ENCODE measurements at regions of chr1 and their contacts with region 1.

Region 1: DNA sequence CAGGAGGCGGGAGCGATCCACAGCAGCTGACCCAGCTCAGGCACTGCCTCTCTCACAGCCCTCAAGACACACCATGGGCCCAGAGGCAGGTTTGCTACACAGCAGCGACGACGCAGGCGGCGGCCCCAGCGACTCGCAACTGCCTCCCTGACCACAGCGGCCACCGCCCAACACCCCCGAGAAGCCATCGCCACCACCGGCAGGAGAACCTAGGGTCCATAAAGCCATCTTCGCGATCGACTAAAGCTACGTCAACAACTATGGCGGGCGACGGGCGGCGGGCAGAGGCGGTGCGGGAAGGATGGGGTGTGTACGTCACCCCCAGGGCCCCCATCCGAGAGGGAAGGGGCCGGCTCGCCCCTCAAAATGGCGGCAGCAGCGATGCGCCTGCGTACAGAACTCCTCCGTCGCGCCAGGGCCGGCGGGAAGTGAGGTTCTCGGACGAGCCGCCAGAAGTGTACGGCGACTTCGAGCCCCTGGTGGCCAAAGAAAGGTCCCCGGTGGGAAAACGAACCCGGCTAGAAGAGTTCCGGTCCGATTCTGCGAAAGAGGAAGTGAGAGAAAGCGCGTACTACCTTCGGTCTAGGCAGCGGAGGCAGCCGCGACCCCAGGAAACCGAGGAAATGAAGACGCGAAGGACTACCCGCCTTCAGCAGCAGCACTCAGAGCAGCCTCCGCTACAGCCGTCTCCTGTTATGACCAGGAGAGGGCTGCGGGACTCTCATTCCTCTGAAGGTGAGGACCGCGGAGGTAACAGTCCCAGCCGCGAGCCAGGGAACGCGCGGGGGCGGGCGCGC is at the start of gene TOR1AIP1:
- DNase-seq: peak; percentile 98
- H3K4me3 ChIP-seq: peak within 1 kb of the TSS; percentile 65
- H3K27ac ChIP-seq: peak within 1 kb of the TSS; percentile 97
- H3K4me1 ChIP-seq: peaks cover 7% of the 10 kb centered on the region
- H3K27me3 ChIP-seq: no peaks in the 10 kb centered on the region
- CTCF ChIP-seq: peak; percentile 6 to 84 (median 81)
- EP300 ChIP-seq: no peak
- POLR2A ChIP-seq: peak; percentile 99
- total RNA-seq, gene TOR1AIP1: 55.4 to 70.9 (median 61.1) TPM

Region 2: DNA sequence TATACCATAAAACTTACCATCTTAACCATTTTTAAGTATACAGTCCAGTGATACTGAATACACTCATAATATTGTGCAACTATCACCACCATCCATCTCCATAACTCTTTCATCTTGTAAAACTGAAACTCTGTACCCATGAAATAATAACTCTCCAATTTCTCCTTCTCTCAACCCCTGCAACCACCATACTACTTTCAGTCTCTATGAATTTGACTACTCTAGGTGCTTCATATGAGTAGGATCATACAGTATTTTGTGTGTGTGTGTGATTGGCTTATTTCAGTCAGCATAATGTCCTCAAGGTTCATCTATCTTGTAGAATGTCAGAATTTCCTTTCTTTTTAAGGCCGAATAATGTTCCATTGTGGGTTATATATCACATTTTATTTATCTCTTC is 324.4 kb before region 1 on chr1:
- intact Hi-C with region 1: no loop called
- DNase-seq: no peak
- H3K4me3 ChIP-seq: no peak overlapping the region
- H3K27ac ChIP-seq: no peak overlapping the region
- H3K4me1 ChIP-seq: no peaks in the 10 kb centered on the region
- H3K27me3 ChIP-seq: no peaks in the 10 kb centered on the region
- CTCF ChIP-seq: no peak
- EP300 ChIP-seq: no peak
- POLR2A ChIP-seq: no peak

Region 3: DNA sequence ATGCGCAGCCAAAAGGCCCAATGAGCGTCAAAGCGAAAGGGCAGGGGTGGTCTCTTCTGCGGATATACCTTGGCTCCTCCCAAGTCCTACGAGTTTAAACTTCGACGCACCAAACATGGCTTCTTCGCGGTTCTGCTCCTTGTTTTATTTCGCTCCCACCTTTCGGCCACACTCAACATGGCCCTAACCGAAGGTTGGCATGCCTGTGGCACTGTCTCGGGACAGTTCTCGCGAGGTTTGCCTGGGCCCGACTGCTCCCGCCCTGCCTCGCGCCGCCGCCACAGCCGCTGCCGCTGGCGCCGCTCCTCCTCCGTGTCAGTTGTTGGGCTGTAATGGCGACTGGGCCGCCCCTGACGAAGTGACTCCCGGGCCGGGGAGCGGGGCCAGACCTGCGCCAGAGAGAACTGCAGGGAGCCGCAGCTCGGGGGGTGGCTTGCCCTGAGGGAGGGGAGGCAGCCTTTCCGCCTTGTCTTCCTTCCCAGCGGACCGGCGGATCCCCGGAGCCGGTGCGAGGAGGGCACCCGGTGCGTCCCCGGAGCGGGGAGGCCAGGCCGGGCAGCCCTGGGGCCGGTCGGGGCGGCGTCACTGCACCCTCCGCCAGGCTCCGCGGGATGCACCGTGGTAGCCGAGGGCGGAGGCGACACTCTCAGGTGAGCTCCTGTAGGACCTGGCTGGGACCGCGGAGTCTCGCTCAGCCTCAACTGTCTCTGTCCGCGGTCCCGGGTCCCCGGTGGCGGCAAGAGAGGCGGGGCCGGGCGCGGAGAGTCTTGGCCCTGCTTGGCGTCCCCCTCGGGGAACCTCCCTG is 72.3 kb after region 1 on chr1 and contains the start of gene CEP350:
- intact Hi-C with region 1: loop called in 2 of 4 experiments (anchors 2 to 10 kb)
- DNase-seq: peak; percentile 98 to 99 (median 98)
- H3K4me3 ChIP-seq: peak within 1 kb of the TSS; percentile 97
- H3K27ac ChIP-seq: peak within 1 kb of the TSS; percentile 88 to 92
- H3K4me1 ChIP-seq: no peaks in the 10 kb centered on the region
- H3K27me3 ChIP-seq: no peaks in the 10 kb centered on the region
- CTCF ChIP-seq: peak in 1 of 3 donors; percentile 20
- EP300 ChIP-seq: no peak
- POLR2A ChIP-seq: peak; percentile 77
- total RNA-seq, gene CEP350: 38.7 to 69.4 (median 55.2) TPM

Region 4: GRCh38 chr1:180154325-180155181 is 272.1 kb after region 1 on chr1 and contains the start of gene QSOX1:
- intact Hi-C with region 1: loop called in 1 of 4 experiments (anchors 5 kb)
- DNase-seq: peak; percentile 88 to 93 (median 91)
- H3K4me3 ChIP-seq: peak within 1 kb of the TSS; percentile 81
- H3K27ac ChIP-seq: peak within 1 kb of the TSS; percentile 77 to 94
- H3K4me1 ChIP-seq: peaks cover 15% of the 10 kb centered on the region
- H3K27me3 ChIP-seq: no peaks in the 10 kb centered on the region
- CTCF ChIP-seq: peak in 2 of 3 donors; percentile 17 to 20
- EP300 ChIP-seq: no peak
- POLR2A ChIP-seq: peak; percentile 66
- total RNA-seq, gene QSOX1: 57.8 to 475 (median 229) TPM